Heart right ventricle (tissue), 16 donors: ENCODE measurements at regions of chr4 and their contacts with region 1.

Region 1: GRCh38 chr4:88225232-88226105 is 58.9 kb downstream of the PPM1K start:
- DNase-seq: no peak
- ATAC-seq: peak in 5 of 8 donors; percentile 26 to 58 (median 46)
- H3K4me3 ChIP-seq: no peak overlapping the region
- H3K27ac ChIP-seq: peak overlapping the region in 1 of 10 donors; percentile 39
- H3K4me1 ChIP-seq: peaks cover 0 to 40% (median 17%) of the 10 kb centered on the region in 9 donors
- H3K27me3 ChIP-seq: no peaks in the 10 kb centered on the region
- CTCF ChIP-seq: no peak

Region 2: GRCh38 chr4:88070031-88070430 is 155.4 kb before region 1 on chr4:
- intact Hi-C with region 1: no loop called
- DNase-seq: no peak
- ATAC-seq: no peak
- H3K4me3 ChIP-seq: no peak overlapping the region
- H3K27ac ChIP-seq: no peak overlapping the region
- H3K4me1 ChIP-seq: no peaks in the 10 kb centered on the region
- H3K27me3 ChIP-seq: no peaks in the 10 kb centered on the region
- CTCF ChIP-seq: no peak

Region 3: DNA sequence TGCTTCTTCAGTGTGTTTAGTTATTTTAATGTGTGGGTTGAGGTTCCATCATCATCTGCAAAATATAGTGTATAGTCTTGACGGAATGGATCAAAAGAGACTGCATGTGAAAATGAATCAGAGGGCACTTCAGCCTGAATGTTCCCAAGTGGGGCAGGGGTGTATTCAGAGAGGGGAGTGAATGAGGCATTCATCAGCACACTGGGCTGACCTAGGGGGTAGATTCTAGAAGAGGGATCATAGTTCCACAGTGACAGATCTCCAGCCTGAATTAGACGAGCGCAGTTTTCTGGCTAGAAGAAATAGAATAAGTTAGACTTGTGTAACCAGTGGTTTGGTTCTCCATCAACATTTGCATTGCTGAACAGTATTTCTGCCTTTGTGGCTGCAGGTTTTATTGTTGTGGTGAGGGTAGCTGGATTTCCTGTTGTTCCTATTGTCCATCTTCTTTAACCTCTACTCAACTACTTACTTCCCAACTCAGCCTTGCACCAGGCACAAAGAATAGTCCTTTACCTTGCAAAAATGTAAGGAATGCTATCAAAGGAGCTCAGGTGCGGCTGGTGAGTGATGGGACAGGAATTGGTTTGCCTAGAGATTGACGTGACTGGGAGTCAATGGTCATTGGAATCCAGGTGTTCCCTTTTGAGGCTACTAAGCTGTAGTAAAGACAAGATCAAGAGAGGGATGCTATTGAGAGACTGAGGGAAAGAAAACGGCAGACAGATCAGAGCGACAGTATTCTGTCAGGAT is 421.2 kb after region 1 on chr4:
- intact Hi-C with region 1: loop called in 1 of 10 experiments (anchors 5 kb)
- DNase-seq: no peak
- ATAC-seq: no peak
- H3K4me3 ChIP-seq: no peak overlapping the region
- H3K27ac ChIP-seq: no peak overlapping the region
- H3K4me1 ChIP-seq: peaks cover 0 to 21% (median 13%) of the 10 kb centered on the region in 9 donors
- H3K27me3 ChIP-seq: no peaks in the 10 kb centered on the region
- CTCF ChIP-seq: no peak